ENCODE measurements at regions of chr9 and their contacts with region 1.

Region 1: GRCh38 chr9:77848897-77849296 is 182.7 kb downstream of the GNAQ start:
- DNase-seq: peak; percentile 80
- H3K4me3 ChIP-seq: no peak overlapping the region
- H3K27ac ChIP-seq: peak overlapping the region; percentile 75
- H3K4me1 ChIP-seq: peaks cover 85% of the 10 kb centered on the region
- H3K27me3 ChIP-seq: no peaks in the 10 kb centered on the region
- CTCF ChIP-seq: no peak
- POLR2A ChIP-seq: no peak

Region 2: DNA sequence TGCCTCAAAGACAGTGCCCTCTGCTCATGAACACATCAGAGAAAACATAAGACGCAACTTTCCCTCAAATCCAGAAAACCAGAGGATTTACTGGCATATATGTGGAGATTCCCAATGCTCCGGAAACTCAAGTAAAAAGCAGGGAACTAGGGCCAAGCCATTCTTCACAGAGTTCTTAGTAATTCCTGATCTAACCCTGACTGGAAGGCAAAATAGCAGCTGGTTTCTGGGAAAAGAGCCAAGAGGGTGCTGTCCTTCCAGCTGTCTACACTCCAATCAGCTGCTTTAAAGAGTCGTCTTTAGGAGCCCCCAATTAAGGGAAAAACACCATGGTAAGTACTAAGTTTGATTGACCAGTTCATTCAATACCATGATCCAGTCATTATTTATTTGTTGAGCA is 250.4 kb before region 1 on chr9:
- CTCF ChIA-PET with region 1: no interaction called
- POLR2A ChIA-PET with region 1: no interaction called
- dilution Hi-C with region 1: no loop called
- intact Hi-C with region 1: loop called (anchors 5 kb)
- DNase-seq: peak; percentile 89
- H3K4me3 ChIP-seq: no peak overlapping the region
- H3K27ac ChIP-seq: no peak overlapping the region
- H3K4me1 ChIP-seq: peaks cover 45% of the 10 kb centered on the region
- H3K27me3 ChIP-seq: no peaks in the 10 kb centered on the region
- CTCF ChIP-seq: no peak
- POLR2A ChIP-seq: no peak

Region 3: GRCh38 chr9:77764894-77765780 is 83.8 kb before region 1 on chr9:
- CTCF ChIA-PET with region 1: interaction called, 3 read pairs
- POLR2A ChIA-PET with region 1: no interaction called
- dilution Hi-C with region 1: no loop called
- intact Hi-C with region 1: loop called (anchors 2 kb)
- DNase-seq: peak; percentile 58
- H3K4me3 ChIP-seq: no peak overlapping the region
- H3K27ac ChIP-seq: peak overlapping the region; percentile 11
- H3K4me1 ChIP-seq: peaks cover 12% of the 10 kb centered on the region
- H3K27me3 ChIP-seq: no peaks in the 10 kb centered on the region
- CTCF ChIP-seq: peak; percentile 35 to 46
- POLR2A ChIP-seq: no peak

Region 4: DNA sequence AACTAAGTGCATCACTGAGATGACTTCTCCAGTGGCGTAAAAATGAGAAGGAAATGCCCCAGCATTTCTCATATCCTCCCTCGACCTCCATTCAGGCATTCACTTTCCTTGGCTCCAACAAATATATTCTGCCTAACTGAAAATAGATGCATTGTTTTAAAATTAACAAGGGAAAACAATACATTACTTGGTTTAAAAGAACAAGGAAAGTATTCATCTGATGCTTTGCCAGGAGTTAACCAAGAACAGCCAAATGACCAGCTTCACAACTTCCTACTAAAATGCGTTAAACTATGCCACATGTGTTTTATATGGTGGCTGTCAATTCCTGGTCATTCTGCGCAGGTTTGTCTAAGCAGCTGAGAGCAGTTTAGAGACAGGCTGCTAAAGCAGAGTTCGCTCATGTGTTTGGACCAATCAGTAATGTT is 61.3 kb after region 1 on chr9:
- CTCF ChIA-PET with region 1: no interaction called
- POLR2A ChIA-PET with region 1: no interaction called
- dilution Hi-C with region 1: no loop called
- intact Hi-C with region 1: loop called (anchors 1 kb)
- DNase-seq: peak; percentile 88
- H3K4me3 ChIP-seq: peak overlapping the region in 1 of 3 experiments; percentile 19
- H3K27ac ChIP-seq: peak overlapping the region; percentile 67
- H3K4me1 ChIP-seq: peaks cover 44% of the 10 kb centered on the region
- H3K27me3 ChIP-seq: no peaks in the 10 kb centered on the region
- CTCF ChIP-seq: no peak
- POLR2A ChIP-seq: no peak

Region 5: GRCh38 chr9:78121488-78121887 is 272.6 kb after region 1 on chr9:
- CTCF ChIA-PET with region 1: interaction called, 3 read pairs
- POLR2A ChIA-PET with region 1: no interaction called
- dilution Hi-C with region 1: no loop called
- intact Hi-C with region 1: loop called (anchors 2 kb)
- DNase-seq: peak; percentile 76
- H3K4me3 ChIP-seq: no peak overlapping the region
- H3K27ac ChIP-seq: no peak overlapping the region
- H3K4me1 ChIP-seq: no peaks in the 10 kb centered on the region
- H3K27me3 ChIP-seq: no peaks in the 10 kb centered on the region
- CTCF ChIP-seq: peak; percentile 64 to 65
- POLR2A ChIP-seq: no peak

Region 6: DNA sequence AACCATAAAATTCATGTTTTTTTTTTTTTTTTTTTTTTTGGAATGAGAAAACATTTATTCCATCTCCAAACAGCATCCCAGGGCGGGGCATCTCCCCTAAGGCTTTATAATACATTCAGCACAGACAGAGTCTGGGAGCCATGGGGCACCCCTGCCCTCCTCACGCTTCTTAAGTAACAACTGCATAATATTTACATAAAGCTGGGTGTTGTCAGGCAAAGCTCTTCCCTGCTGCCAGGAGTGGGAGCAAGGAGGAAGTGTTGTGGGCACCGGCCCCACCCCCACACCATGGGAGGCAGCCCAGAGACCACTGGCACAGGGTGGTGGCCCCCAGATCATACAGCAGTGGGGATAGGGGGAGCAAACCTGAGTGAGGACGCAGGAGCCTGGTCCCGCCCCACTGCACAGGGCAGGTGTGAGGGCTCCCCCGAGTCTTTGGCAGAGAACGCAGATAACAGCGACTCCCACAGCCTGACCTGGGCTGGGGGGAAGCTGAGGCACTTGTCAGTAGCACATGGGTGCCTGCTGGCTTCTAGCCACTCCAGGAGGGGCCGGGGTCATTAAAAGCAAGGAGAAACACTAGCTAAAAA is 300.9 kb after region 1 on chr9:
- CTCF ChIA-PET with region 1: no interaction called
- POLR2A ChIA-PET with region 1: no interaction called
- dilution Hi-C with region 1: no loop called
- intact Hi-C with region 1: no loop called
- DNase-seq: no peak
- H3K4me3 ChIP-seq: no peak overlapping the region
- H3K27ac ChIP-seq: no peak overlapping the region
- H3K4me1 ChIP-seq: peaks cover 8% of the 10 kb centered on the region
- H3K27me3 ChIP-seq: no peaks in the 10 kb centered on the region
- CTCF ChIP-seq: no peak
- POLR2A ChIP-seq: no peak